ENCODE measurements at regions of chr6 and their contacts with region 1.

Region 1: DNA sequence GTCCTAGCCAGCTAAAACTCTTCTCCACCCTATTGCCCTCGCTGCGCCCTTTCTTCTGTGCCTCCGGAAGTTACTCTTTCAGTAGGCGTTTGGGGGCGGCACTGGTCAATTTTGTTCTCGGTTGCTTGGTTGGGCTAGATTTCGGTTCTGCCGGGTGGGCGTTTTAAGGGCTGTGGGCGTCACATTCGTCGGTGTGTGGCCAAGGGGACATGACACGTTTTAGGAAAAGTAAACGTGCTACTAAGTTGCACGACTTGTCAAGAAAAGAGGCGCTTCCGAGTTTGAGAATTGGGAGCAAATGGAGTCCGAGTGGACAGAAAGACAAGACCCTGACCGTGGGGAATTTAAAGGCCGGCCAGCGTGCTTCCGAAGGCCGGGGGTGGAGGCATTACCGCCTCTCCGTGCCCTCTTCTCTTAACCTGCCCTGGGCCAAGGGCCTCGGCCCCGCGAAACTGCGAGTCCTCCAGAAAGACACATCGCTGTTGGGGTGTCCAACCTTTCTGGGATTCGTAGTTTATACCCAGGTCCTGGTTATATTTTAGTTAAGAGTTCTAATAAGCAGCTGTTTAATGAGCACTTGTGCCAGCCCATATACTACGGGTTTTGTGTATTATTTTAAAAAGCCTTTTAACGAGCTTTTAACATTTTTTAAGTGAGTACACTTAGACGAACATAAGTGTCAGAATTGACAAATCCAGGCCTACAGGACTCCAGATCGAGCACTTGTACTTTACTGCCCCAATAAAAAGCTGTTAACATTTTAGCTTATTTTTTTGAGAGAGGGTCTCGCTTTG is 661 bp upstream of the BAG6 start:
- DNase-seq: peak in 4 of 14 experiments; percentile 14 to 93 (median 80)
- ATAC-seq: peak; percentile 70
- H3K4me3 ChIP-seq: peak overlapping the region; percentile 63
- H3K4me3 Mint-ChIP-seq: peak overlapping the region; percentile 97
- H3K27ac ChIP-seq: peak overlapping the region; percentile 99
- H3K27ac Mint-ChIP-seq: peak overlapping the region; percentile 98
- H3K4me1 ChIP-seq: peaks cover 46% of the 10 kb centered on the region
- H3K4me1 Mint-ChIP-seq: peaks cover 65% of the 10 kb centered on the region
- H3K27me3 ChIP-seq: no peaks in the 10 kb centered on the region
- H3K27me3 Mint-ChIP-seq: no peaks in the 10 kb centered on the region
- CTCF ChIP-seq: no peak

Region 2: DNA sequence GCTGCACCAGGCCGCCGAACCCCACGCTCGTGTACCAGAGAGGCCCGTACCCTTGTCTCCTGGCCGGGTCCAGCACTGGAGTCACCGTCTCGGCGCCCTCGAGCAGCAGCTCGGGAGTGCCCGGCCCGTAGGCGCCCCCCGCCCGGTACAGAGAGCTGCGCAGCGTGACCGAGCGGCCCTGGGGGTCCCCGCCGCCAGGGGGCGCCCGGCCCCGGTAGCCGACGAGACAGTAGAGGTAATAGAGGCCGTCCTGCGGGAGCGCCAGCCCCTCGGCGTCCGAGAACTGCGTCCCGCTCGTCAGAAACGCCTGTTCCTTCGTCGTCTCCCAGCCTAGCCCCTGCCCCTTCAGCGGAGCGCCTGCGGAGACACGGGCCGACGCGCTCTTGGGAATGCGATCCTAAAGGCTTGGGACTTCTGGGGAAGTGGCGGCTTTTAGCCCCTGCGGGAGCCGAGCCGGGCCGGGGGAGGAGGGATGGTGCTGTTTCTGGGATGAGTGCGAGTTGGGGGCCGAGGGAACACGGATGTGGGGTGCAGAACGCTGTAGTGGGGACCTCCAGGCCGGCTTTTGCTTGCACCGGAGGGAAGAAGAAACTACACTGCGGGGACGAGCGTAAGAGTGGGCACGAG is 72.2 kb before region 1 on chr6:
- CTCF ChIA-PET with region 1: interaction called, 3 read pairs
- POLR2A ChIA-PET with region 1: interaction called, 19 read pairs
- intact Hi-C with region 1: no loop called
- DNase-seq: peak; percentile 77 to 93 (median 90)
- ATAC-seq: peak; percentile 66
- H3K4me3 ChIP-seq: peak overlapping the region; percentile 97
- H3K4me3 Mint-ChIP-seq: peak overlapping the region; percentile 97
- H3K27ac ChIP-seq: peak overlapping the region; percentile 82 to 95
- H3K27ac Mint-ChIP-seq: peak overlapping the region; percentile 85
- H3K4me1 ChIP-seq: peaks cover 82% of the 10 kb centered on the region
- H3K4me1 Mint-ChIP-seq: peaks cover 84% of the 10 kb centered on the region
- H3K27me3 ChIP-seq: no peaks in the 10 kb centered on the region
- H3K27me3 Mint-ChIP-seq: no peaks in the 10 kb centered on the region
- CTCF ChIP-seq: peak; percentile 98

Region 3: GRCh38 chr6:31639449-31639861 is 13.7 kb before region 1 on chr6:
- CTCF ChIA-PET with region 1: no interaction called
- POLR2A ChIA-PET with region 1: interaction called, 19 read pairs
- intact Hi-C with region 1: no loop called
- DNase-seq: no peak
- ATAC-seq: no peak
- H3K4me3 ChIP-seq: no peak overlapping the region
- H3K4me3 Mint-ChIP-seq: no peak overlapping the region
- H3K27ac ChIP-seq: no peak overlapping the region
- H3K27ac Mint-ChIP-seq: peak overlapping the region; percentile 24
- H3K4me1 ChIP-seq: no peaks in the 10 kb centered on the region
- H3K4me1 Mint-ChIP-seq: no peaks in the 10 kb centered on the region
- H3K27me3 ChIP-seq: no peaks in the 10 kb centered on the region
- H3K27me3 Mint-ChIP-seq: no peaks in the 10 kb centered on the region
- CTCF ChIP-seq: no peak

Region 4: DNA sequence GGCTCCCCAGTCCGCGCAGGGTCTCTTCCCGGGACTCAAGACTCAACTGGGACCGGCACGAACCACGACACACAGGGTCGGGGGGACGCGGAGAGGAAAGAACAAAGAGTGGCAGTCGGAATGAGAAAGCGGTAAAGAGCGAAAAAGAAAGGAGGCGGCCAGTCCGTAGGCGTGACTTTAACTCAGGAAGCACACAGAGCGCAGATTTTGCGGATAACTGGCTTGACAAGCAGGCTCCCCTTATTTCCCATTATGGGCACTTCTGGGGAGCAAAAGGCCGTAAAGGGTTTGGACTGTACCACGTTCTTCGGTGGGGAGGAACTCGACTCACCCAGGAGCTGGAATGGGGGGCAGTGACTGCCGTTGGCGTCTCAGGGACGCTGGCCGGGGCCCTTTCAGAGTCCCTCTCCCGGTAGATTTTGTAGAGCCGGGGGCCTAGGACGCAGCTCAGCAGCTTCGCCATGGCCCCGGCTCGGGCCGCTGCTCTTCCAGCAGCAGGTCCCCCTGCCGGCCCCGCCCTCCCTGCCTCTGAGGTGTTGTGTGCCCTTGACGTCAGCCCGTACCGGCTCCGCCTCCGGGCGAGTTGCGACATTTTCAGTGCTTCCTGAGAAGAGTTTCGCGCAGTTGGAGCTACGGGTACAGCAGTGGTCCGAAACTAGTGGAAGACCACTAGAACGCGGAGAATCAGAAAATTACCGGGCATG is 49.8 kb after region 1 on chr6 and contains the start of gene ABHD16A:
- CTCF ChIA-PET with region 1: interaction called, 3 read pairs
- POLR2A ChIA-PET with region 1: interaction called, 22 read pairs
- intact Hi-C with region 1: loop called in 1 of 2 experiments (anchors 1 kb)
- DNase-seq: peak; percentile 94 to 99 (median 97)
- ATAC-seq: peak; percentile 91
- H3K4me3 ChIP-seq: peak within 1 kb of the TSS; percentile 67
- H3K4me3 Mint-ChIP-seq: peak within 1 kb of the TSS; percentile 94
- H3K27ac ChIP-seq: peak within 1 kb of the TSS; percentile 95 to 98
- H3K27ac Mint-ChIP-seq: peak within 1 kb of the TSS; percentile 94
- H3K4me1 ChIP-seq: peaks cover 35% of the 10 kb centered on the region
- H3K4me1 Mint-ChIP-seq: peaks cover 33% of the 10 kb centered on the region
- H3K27me3 ChIP-seq: no peaks in the 10 kb centered on the region
- H3K27me3 Mint-ChIP-seq: no peaks in the 10 kb centered on the region
- CTCF ChIP-seq: no peak
- total RNA-seq, gene ABHD16A: 52.3 to 59.3 TPM

Region 5: GRCh38 chr6:31827286-31828079 is 174.4 kb after region 1 on chr6 and contains the start of gene HSPA1B:
- CTCF ChIA-PET with region 1: interaction called, 5 read pairs
- POLR2A ChIA-PET with region 1: interaction called, 34 read pairs
- intact Hi-C with region 1: loop called in 1 of 2 experiments (anchors 2 kb)
- DNase-seq: peak; percentile 64 to 93 (median 84)
- ATAC-seq: peak; percentile 66
- H3K4me3 ChIP-seq: peak within 1 kb of the TSS; percentile 84
- H3K4me3 Mint-ChIP-seq: peak within 1 kb of the TSS; percentile 96
- H3K27ac ChIP-seq: peak within 1 kb of the TSS; percentile 74 to 76
- H3K27ac Mint-ChIP-seq: peak within 1 kb of the TSS; percentile 97
- H3K4me1 ChIP-seq: peaks cover 43% of the 10 kb centered on the region
- H3K4me1 Mint-ChIP-seq: peaks cover 43% of the 10 kb centered on the region
- H3K27me3 ChIP-seq: no peaks in the 10 kb centered on the region
- H3K27me3 Mint-ChIP-seq: no peaks in the 10 kb centered on the region
- CTCF ChIP-seq: no peak
- total RNA-seq, gene HSPA1B: 8.3 to 9.8 TPM

Region 6: GRCh38 chr6:31862344-31863227 is 209.5 kb after region 1 on chr6 and contains the start of gene NEU1:
- CTCF ChIA-PET with region 1: no interaction called
- POLR2A ChIA-PET with region 1: interaction called, 27 read pairs
- intact Hi-C with region 1: loop called in 1 of 2 experiments (anchors 1 kb)
- DNase-seq: peak; percentile 95 to 100 (median 98)
- ATAC-seq: peak; percentile 93
- H3K4me3 ChIP-seq: peak within 1 kb of the TSS; percentile 99
- H3K4me3 Mint-ChIP-seq: peak within 1 kb of the TSS; percentile 88
- H3K27ac ChIP-seq: peak within 1 kb of the TSS; percentile 80 to 96
- H3K27ac Mint-ChIP-seq: peak within 1 kb of the TSS; percentile 91
- H3K4me1 ChIP-seq: peaks cover 37% of the 10 kb centered on the region
- H3K4me1 Mint-ChIP-seq: peaks cover 28% of the 10 kb centered on the region
- H3K27me3 ChIP-seq: no peaks in the 10 kb centered on the region
- H3K27me3 Mint-ChIP-seq: no peaks in the 10 kb centered on the region
- CTCF ChIP-seq: no peak
- total RNA-seq, gene NEU1: 19.7 to 21.1 TPM

Region 7: DNA sequence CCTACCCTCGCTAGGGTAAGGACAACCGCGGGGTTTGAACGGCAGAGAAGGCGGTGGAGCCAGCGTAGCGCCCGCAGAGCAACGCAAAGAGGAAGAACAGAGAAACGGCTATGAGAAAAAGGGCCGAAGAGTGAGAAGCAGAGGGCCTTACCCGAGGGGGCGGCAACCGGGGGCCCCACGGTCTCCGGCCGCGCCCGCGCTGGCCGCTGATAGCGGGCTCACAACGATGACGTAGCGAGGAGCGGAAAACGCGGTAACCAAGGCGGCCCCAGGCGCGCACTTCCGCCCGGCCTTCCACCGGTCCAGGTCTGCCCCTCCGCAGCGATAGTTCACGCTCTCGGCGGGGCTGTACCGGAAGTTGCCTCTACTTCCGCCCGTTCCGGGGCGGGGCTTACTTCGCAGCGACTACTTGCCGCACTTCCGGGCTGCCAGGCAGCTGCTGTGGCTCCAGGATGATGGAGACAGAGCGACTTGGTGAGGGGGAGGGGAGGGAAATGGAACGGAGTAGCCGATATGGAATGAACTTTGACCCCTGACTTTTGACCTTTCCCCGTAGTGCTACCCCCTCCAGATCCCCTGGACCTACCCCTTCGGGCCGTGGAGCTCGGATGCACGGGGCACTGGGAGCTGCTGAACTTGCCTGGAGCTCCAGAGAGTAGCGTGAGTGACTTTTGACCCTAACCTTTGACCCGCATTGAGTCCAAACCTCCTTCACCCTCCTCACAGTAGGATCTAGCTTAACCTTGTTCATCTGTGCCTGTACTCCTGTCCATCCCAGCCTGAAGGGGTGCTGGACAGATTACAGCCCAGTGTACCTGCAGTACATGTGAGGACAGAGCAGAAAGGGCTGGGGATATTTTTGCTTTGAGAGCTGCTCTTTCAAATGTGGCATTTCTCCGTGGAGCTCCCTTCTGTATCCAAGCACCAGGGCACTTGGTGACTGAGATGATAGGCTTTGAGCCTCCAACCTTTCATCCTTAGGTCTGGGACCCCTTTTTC is 305.9 kb after region 1 on chr6 and contains the starts of genes NELFE and SKIC2:
- CTCF ChIA-PET with region 1: no interaction called
- POLR2A ChIA-PET with region 1: interaction called, 12 read pairs
- intact Hi-C with region 1: no loop called
- DNase-seq: peak; percentile 96 to 100 (median 98)
- ATAC-seq: peak; percentile 97
- H3K4me3 ChIP-seq: peak within 1 kb of the TSS; percentile 97
- H3K4me3 Mint-ChIP-seq: peak within 1 kb of the TSS; percentile 96
- H3K27ac ChIP-seq: peak within 1 kb of the TSS; percentile 94 to 96
- H3K27ac Mint-ChIP-seq: peak within 1 kb of the TSS; percentile 97
- H3K4me1 ChIP-seq: peaks cover 30% of the 10 kb centered on the region
- H3K4me1 Mint-ChIP-seq: peaks cover 38% of the 10 kb centered on the region
- H3K27me3 ChIP-seq: no peaks in the 10 kb centered on the region
- H3K27me3 Mint-ChIP-seq: no peaks in the 10 kb centered on the region
- CTCF ChIP-seq: no peak
- total RNA-seq, gene NELFE: 53.8 to 58.2 TPM
- total RNA-seq, gene SKIC2: 133 to 141 TPM

Measured in CD4-positive, alpha-beta T cell (primary cell).